ENCODE measurements at regions of chr2 and their contacts with region 1.

Region 1: DNA sequence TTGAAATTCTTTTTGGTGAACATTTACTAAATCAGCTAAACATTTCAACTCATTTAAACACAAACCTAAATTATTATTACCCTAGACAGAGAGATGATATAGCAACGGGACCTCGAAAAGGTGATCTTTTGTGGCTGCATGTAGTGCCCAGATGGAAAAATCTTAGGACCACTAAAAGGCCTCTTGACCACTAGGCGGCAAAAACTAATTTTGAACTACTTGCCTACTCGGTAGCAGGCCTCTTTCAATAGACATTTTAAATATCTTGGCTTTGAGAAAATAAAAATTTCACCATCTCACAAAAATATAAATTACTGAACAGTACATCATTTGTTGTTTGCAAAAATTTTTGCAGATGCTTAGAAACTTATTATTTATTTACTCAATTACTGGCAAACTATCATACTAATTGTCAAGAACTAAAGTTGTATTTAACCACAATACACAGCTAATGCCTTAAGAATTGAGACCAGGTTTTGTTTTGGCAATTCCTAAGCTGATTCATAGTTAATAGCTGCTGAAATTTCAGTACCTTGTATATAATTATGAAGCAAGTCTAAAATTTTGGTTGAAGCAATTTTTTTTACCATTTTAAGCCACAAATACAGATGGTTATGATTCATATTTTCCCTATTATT is 9.4 kb downstream of the COL3A1 start:
- DNase-seq: no peak
- H3K4me3 ChIP-seq: no peak overlapping the region
- H3K27ac ChIP-seq: peak overlapping the region in 4 of 5 donors; percentile 22 to 83 (median 73)
- H3K4me1 ChIP-seq: peaks cover 0 to 19% (median 8%) of the 10 kb centered on the region in 4 donors
- H3K27me3 ChIP-seq: no peaks in the 10 kb centered on the region
- CTCF ChIP-seq: peak in 2 of 7 experiments; percentile 8 to 37
- EP300 ChIP-seq: no peak
- POLR2A ChIP-seq: no peak

Region 2: GRCh38 chr2:188524519-188525113 is 458.9 kb before region 1 on chr2:
- intact Hi-C with region 1: loop called (anchors 10 kb)
- DNase-seq: peak; percentile 27 to 81
- H3K4me3 ChIP-seq: no peak overlapping the region
- H3K27ac ChIP-seq: no peak overlapping the region
- H3K4me1 ChIP-seq: peaks cover 0 to 48% (median 23%) of the 10 kb centered on the region in 4 donors
- H3K27me3 ChIP-seq: no peaks in the 10 kb centered on the region
- CTCF ChIP-seq: peak in 5 of 7 experiments; percentile 33 to 85 (median 68)
- EP300 ChIP-seq: no peak
- POLR2A ChIP-seq: no peak

Region 3: GRCh38 chr2:188701836-188702235 is 281.7 kb before region 1 on chr2:
- intact Hi-C with region 1: no loop called
- DNase-seq: no peak
- H3K4me3 ChIP-seq: no peak overlapping the region
- H3K27ac ChIP-seq: no peak overlapping the region
- H3K4me1 ChIP-seq: no peaks in the 10 kb centered on the region
- H3K27me3 ChIP-seq: no peaks in the 10 kb centered on the region
- CTCF ChIP-seq: no peak
- EP300 ChIP-seq: no peak
- POLR2A ChIP-seq: no peak